ENCODE measurements at regions of chr2 and their contacts with region 1.

Region 1: DNA sequence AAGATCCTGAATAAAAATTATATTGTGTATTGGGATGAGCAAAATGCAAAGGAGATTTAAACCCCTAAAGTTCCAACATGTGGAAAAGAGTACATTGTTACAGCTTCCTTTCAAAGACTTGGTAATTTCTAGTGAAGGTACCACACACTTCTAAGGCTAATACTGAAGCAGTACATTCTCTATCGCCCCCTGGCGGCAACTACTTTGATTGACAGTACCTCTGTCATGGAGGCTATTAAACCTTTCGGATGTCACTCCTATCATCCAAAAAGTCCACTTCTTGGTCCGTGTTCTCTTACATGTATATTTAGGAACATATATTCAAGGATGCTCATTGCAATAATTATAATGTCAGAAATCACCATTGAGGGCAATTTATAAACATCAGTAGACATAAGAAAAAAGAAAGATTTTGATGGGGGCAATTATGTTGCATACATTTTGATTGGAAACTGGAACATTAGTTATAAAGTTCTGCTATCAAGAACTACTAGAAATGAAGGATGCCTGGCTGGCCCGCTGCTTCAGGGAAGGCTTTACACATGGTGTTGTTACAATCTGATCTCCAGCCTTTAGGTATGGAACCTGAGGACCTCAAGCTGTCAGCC is 601.6 kb downstream of the CPS1 start:
- DNase-seq: peak; percentile 48
- H3K4me3 ChIP-seq: no peak overlapping the region; a peak in 1 of 4 replicates
- H3K27ac ChIP-seq: no peak overlapping the region
- H3K4me1 ChIP-seq: no peaks in the 10 kb centered on the region; a peak in 1 of 4 replicates
- H3K27me3 ChIP-seq: no peaks in the 10 kb centered on the region
- CTCF ChIP-seq: peak; percentile 96
- EP300 ChIP-seq: no peak
- RAD21 ChIP-seq: peak; percentile 80

Region 2: DNA sequence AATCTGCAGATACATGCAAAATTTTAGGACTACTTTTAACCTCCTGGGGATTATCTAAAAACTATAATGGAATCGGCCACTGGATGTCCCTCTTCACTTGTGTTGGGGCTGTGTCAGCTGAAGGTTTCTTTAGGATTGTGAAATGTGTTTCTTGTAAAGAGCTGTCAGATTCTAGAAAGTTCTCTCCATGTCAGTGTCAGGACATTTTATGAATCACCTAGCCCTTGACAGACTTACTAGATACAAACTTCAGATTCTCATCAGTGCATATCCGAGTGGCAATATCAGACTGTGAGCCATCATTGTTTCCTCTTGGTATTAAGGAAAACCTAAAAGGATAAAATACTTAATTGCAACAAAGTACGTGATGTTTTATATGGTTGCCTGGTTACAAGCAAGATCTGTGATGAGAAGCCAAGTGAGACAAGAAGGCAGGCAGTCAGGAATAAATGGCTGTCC is 494.3 kb before region 1 on chr2:
- CTCF ChIA-PET with region 1: interaction called, 21 read pairs
- POLR2A ChIA-PET with region 1: no interaction called
- DNase-seq: peak; percentile 40
- H3K4me3 ChIP-seq: no peak overlapping the region
- H3K27ac ChIP-seq: no peak overlapping the region
- H3K4me1 ChIP-seq: no peaks in the 10 kb centered on the region
- H3K27me3 ChIP-seq: no peaks in the 10 kb centered on the region
- CTCF ChIP-seq: peak; percentile 38
- EP300 ChIP-seq: no peak; a peak in 1 of 4 replicates
- RAD21 ChIP-seq: peak; percentile 84

Region 3: GRCh38 chr2:211085056-211085680 is 72.8 kb before region 1 on chr2:
- CTCF ChIA-PET with region 1: interaction called, 19 read pairs
- POLR2A ChIA-PET with region 1: no interaction called
- DNase-seq: peak; percentile 20
- H3K4me3 ChIP-seq: peak overlapping the region in 1 of 2 experiments; percentile 2; a peak in 1 of 4 replicates
- H3K27ac ChIP-seq: no peak overlapping the region; a peak in 1 of 4 replicates
- H3K4me1 ChIP-seq: no peaks in the 10 kb centered on the region; a peak in 1 of 4 replicates
- H3K27me3 ChIP-seq: no peaks in the 10 kb centered on the region
- CTCF ChIP-seq: peak; percentile 83
- EP300 ChIP-seq: no peak
- RAD21 ChIP-seq: peak; percentile 64

Region 4: DNA sequence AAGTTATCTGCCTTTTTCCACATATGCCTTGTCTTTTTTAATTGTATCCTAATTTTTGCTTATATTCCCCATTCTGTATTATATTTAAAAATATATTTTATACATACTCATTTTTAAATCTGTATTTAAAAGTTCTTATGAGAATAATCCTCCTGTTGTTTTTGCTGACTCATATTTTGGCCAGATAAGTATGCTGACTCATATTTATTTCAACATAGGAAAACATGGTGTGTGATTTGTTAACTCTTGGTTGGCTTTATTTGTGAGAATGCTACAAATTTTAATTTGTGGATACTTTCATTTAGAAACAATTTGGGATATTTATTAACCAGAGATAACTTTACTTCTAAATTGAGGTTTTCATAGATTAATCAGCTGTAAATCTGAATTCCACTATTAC is 13.9 kb before region 1 on chr2:
- CTCF ChIA-PET with region 1: interaction called, 12 read pairs
- POLR2A ChIA-PET with region 1: no interaction called
- DNase-seq: no peak
- H3K4me3 ChIP-seq: no peak overlapping the region
- H3K27ac ChIP-seq: no peak overlapping the region
- H3K4me1 ChIP-seq: no peaks in the 10 kb centered on the region
- H3K27me3 ChIP-seq: no peaks in the 10 kb centered on the region
- CTCF ChIP-seq: no peak
- EP300 ChIP-seq: no peak
- RAD21 ChIP-seq: no peak

Region 5: DNA sequence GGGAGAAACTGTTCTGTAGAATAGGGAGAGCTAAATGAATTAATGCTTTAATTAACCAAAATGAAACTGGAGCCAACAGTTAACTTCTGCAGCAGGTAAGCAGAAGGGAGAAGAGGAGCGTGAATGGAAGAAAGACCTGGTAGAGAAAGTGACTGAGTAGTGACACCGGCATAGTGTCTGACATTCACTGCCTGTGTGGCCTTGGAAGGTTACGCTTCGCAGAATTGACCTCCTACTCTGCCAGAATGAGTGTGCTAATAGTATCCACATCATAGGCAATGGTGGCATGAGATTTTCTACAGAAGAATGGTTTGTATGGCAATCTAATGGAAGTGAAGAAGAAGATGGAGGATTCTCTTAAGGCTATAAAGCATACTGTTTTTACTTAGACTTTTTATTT is 12.9 kb after region 1 on chr2:
- CTCF ChIA-PET with region 1: interaction called, 14 read pairs
- POLR2A ChIA-PET with region 1: no interaction called
- DNase-seq: no peak
- H3K4me3 ChIP-seq: no peak overlapping the region
- H3K27ac ChIP-seq: no peak overlapping the region
- H3K4me1 ChIP-seq: no peaks in the 10 kb centered on the region
- H3K27me3 ChIP-seq: no peaks in the 10 kb centered on the region
- CTCF ChIP-seq: no peak
- EP300 ChIP-seq: no peak
- RAD21 ChIP-seq: no peak